ENCODE measurements at regions of chr10 and their contacts with region 1.

Region 1: DNA sequence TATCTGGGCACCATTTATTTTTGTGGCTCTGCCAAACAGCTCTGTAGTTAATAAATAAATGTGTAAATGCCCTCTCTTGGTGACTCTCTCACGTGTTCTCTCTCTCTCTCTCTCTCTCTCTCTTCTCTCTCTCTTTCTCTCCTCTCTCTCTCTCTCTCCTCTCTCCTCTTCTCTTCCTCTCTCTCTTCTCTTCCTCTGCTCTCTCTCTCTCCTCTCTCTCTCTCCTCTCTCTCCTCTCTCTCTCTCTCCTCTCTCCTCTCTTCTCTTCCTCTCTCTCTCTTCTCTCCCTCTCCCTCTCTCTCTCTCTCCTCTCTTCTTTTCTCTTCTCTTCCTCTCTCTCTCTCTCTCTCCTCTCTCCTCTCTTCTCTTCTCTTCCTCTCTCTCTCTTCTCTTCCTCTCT is 145.8 kb upstream of the TMEM72 start:
- DNase-seq: no peak
- H3K4me3 ChIP-seq: no peak overlapping the region
- H3K27ac ChIP-seq: no peak overlapping the region
- H3K4me1 ChIP-seq: no peaks in the 10 kb centered on the region
- H3K27me3 ChIP-seq: no peaks in the 10 kb centered on the region
- CTCF ChIP-seq: no peak
- EP300 ChIP-seq: no peak
- POLR2A ChIP-seq: no peak

Region 2: GRCh38 chr10:44786286-44786850 is 21.1 kb after region 1 on chr10:
- intact Hi-C with region 1: loop called in 1 of 4 experiments (anchors 1 kb)
- DNase-seq: peak; percentile 54 to 82 (median 59)
- H3K4me3 ChIP-seq: no peak overlapping the region
- H3K27ac ChIP-seq: peak overlapping the region in 1 of 2 donors; percentile 74
- H3K4me1 ChIP-seq: peaks cover 14% of the 10 kb centered on the region
- H3K27me3 ChIP-seq: no peaks in the 10 kb centered on the region
- CTCF ChIP-seq: no peak
- EP300 ChIP-seq: no peak
- POLR2A ChIP-seq: no peak